ENCODE measurements at regions of chr4 and their contacts with region 1.

Region 1: DNA sequence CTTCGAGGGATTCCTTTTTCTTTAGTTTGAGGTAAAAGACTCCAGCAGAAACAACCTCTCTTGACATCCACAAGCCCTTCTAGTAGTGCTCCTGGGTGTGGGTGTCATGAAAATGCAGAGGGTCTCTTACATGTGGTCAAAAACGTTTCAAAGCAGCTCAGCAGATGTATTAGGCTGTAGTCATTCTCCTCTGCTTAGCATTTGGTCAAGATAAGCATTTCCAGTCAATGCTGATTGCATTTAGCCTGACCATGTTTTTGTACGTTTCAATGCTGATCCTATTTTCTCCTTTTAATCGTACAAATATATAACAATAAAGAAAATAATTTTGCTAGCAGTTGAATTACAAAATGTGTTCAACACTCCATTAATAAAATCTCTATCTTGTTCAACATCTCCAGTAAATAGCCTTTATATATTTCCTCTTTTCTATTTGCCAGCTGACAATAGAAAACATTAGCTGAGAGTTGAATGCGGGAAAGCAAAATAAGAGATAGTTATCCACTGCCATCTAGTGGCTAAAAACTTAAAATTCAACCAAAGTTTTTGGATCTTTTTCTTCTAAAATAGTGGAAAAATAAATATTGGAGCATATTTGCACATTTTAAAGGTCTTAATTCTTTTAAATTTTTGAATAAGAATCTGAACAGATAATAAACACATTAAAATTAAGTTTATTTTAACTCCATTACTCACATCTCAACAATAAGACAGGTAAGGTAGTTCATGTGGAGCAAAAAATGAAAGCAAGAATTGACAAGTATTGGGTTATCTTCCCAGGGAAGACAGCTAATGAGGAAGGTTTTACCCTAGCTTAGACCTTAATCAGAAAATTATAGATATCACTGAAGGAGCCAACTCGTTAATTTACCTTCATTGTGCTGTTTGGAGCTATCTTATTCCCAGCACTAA is 15.2 kb upstream of the PACRGL start:
- DNase-seq: peak in 4 of 5 donors; percentile 10 to 25 (median 20)
- H3K4me3 ChIP-seq: no peak overlapping the region
- H3K4me3 Mint-ChIP-seq: no peak overlapping the region
- H3K27ac ChIP-seq: no peak overlapping the region
- H3K27ac Mint-ChIP-seq: no peak overlapping the region
- H3K4me1 ChIP-seq: no peaks in the 10 kb centered on the region
- H3K4me1 Mint-ChIP-seq: no peaks in the 10 kb centered on the region
- H3K27me3 ChIP-seq: no peaks in the 10 kb centered on the region
- H3K27me3 Mint-ChIP-seq: peaks cover 3 to 6% of the 10 kb centered on the region in 2 donors

Region 2: DNA sequence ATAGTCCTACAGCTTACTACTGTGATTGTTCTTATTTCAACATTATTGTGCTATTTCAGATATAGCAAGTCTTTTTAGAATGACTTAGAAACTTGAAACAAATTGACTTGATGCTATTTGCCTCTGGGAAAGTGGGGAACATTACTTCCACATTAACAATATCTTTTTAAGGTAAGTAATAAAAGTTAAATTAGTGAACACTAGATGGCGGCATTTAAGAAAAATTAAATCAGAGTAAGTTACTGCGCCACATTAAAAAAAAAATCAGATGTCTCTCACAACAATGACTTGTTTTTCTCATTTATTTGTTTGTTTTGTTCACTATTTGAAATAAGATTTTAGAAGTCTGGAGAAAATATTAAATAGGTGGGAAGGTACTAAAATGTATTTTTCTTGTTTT is 1460.3 kb before region 1 on chr4:
- CTCF ChIA-PET with region 1: no interaction called
- POLR2A ChIA-PET with region 1: no interaction called
- intact Hi-C with region 1: loop called (anchors 10 kb)
- DNase-seq: no peak
- H3K4me3 ChIP-seq: no peak overlapping the region
- H3K4me3 Mint-ChIP-seq: no peak overlapping the region
- H3K27ac ChIP-seq: no peak overlapping the region
- H3K27ac Mint-ChIP-seq: no peak overlapping the region
- H3K4me1 ChIP-seq: no peaks in the 10 kb centered on the region
- H3K4me1 Mint-ChIP-seq: no peaks in the 10 kb centered on the region
- H3K27me3 ChIP-seq: no peaks in the 10 kb centered on the region
- H3K27me3 Mint-ChIP-seq: no peaks in the 10 kb centered on the region

Region 3: GRCh38 chr4:20326977-20327376 is 358.1 kb before region 1 on chr4:
- CTCF ChIA-PET with region 1: no interaction called
- POLR2A ChIA-PET with region 1: no interaction called
- intact Hi-C with region 1: no loop called
- DNase-seq: no peak
- H3K4me3 ChIP-seq: no peak overlapping the region
- H3K4me3 Mint-ChIP-seq: no peak overlapping the region
- H3K27ac ChIP-seq: no peak overlapping the region
- H3K27ac Mint-ChIP-seq: no peak overlapping the region
- H3K4me1 ChIP-seq: no peaks in the 10 kb centered on the region
- H3K4me1 Mint-ChIP-seq: no peaks in the 10 kb centered on the region
- H3K27me3 ChIP-seq: no peaks in the 10 kb centered on the region
- H3K27me3 Mint-ChIP-seq: no peaks in the 10 kb centered on the region

Region 4: DNA sequence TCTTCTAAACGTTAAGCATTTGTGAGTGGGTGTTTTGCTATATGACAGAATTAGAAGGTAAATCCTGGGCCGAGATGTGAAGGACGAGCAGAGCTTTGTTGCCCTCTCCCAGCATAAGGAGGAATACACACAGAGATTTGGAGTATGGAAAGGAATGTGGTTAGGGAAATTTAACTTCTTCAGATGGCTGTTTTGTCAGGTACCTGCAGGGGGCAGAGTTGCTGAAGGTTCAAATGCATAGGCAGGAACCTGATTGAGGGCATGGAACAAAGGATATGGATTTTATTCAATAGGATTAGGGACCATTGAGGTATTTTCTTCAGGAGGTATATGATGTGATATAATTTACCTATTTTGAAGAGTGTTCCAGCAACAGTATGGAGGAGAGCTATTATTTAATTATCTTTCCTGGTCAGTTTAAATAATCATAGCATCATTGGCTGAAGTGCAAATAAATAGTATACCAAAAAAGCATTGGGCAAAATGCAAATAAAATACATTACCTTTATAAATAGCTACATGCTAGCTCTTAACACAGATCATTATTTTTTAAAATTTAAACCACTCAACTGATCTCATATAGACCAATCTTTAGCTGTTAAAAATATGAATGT is 289.8 kb before region 1 on chr4:
- CTCF ChIA-PET with region 1: interaction called, 6 read pairs
- POLR2A ChIA-PET with region 1: no interaction called
- intact Hi-C with region 1: loop called (anchors 1 kb)
- DNase-seq: no peak
- H3K4me3 ChIP-seq: no peak overlapping the region
- H3K4me3 Mint-ChIP-seq: no peak overlapping the region
- H3K27ac ChIP-seq: no peak overlapping the region
- H3K27ac Mint-ChIP-seq: peak overlapping the region in 1 of 7 donors; percentile 4
- H3K4me1 ChIP-seq: no peaks in the 10 kb centered on the region
- H3K4me1 Mint-ChIP-seq: no peaks in the 10 kb centered on the region
- H3K27me3 ChIP-seq: no peaks in the 10 kb centered on the region
- H3K27me3 Mint-ChIP-seq: peaks cover 0 to 2% of the 10 kb centered on the region in 2 donors

Region 5: GRCh38 chr4:20422398-20422797 is 262.7 kb before region 1 on chr4:
- CTCF ChIA-PET with region 1: interaction called, 4 read pairs
- POLR2A ChIA-PET with region 1: no interaction called
- intact Hi-C with region 1: loop called (anchors 1 kb)
- DNase-seq: peak; percentile 11 to 44 (median 15)
- H3K4me3 ChIP-seq: no peak overlapping the region
- H3K4me3 Mint-ChIP-seq: no peak overlapping the region
- H3K27ac ChIP-seq: no peak overlapping the region
- H3K27ac Mint-ChIP-seq: no peak overlapping the region
- H3K4me1 ChIP-seq: no peaks in the 10 kb centered on the region
- H3K4me1 Mint-ChIP-seq: peaks cover 0 to 6% (median 2%) of the 10 kb centered on the region in 4 donors
- H3K27me3 ChIP-seq: no peaks in the 10 kb centered on the region
- H3K27me3 Mint-ChIP-seq: peaks cover 0 to 2% of the 10 kb centered on the region in 2 donors

Region 6: DNA sequence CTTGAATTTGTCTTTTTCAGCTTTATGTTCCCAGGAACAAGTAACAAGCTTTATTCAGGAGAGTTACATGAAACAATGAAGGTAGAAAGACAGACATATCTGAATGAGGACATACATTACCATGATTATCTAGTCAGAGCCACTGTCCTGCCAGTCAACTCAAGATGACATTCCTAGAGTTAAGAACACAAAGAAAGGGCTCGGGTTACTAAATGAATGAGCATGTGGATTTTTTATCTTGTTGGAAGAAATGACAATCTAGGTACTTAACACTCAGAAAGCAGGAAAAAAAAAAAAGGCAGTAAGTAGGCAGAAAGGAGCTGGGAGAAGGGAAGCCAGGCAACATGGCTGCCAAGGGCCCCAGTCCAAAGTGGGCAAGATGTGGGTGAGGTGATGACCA is 12.8 kb before region 1 on chr4:
- CTCF ChIA-PET with region 1: interaction called, 11 read pairs
- POLR2A ChIA-PET with region 1: no interaction called
- intact Hi-C with region 1: no loop called
- DNase-seq: no peak
- H3K4me3 ChIP-seq: no peak overlapping the region
- H3K4me3 Mint-ChIP-seq: no peak overlapping the region
- H3K27ac ChIP-seq: no peak overlapping the region
- H3K27ac Mint-ChIP-seq: no peak overlapping the region
- H3K4me1 ChIP-seq: no peaks in the 10 kb centered on the region
- H3K4me1 Mint-ChIP-seq: no peaks in the 10 kb centered on the region
- H3K27me3 ChIP-seq: no peaks in the 10 kb centered on the region
- H3K27me3 Mint-ChIP-seq: peaks cover 5 to 14% of the 10 kb centered on the region in 2 donors